ENCODE measurements at regions of chr20 and their contacts with region 1.

Region 1: DNA sequence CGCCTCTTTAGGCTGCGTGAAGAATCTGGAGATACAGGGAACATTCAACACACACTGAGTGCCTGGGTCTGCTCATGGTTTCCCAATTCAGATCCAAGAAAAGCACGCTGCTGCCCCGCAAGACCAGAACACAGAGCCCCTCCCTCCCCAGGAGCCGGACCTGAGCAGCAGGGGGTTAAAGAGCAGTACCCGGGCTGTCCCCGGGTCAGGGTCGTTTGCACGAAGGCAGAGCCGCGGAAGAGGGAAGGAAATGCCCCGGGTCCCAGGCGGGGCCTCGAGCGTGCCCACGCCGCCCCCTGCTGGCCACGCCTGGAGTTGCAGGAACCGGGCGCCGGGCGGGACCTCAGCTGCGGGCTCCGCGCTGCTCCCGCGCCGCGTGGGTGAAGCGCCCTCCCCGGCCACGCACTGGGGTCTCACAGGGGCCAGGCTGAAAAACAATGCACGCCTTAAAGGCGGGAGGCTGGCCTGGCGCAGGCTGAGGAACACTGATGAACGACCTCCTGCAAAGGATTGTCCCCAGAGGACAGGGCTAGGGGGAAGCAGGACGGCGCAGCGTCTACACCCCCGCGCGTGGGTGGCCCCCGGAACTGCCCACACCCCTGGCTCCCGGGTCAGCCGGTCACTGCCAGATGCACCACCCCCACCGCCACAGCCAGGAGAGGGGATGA is 48.9 kb downstream of the ANKRD60 start:
- DNase-seq: no peak
- H3K4me3 ChIP-seq: peak overlapping the region; percentile 24 to 45
- H3K27ac ChIP-seq: peak overlapping the region; percentile 25
- H3K4me1 ChIP-seq: peaks cover 36% of the 10 kb centered on the region
- H3K27me3 ChIP-seq: no peaks in the 10 kb centered on the region
- CTCF ChIP-seq: peak; percentile 95 to 96 (median 95)
- POLR2A ChIP-seq: no peak

Region 2: DNA sequence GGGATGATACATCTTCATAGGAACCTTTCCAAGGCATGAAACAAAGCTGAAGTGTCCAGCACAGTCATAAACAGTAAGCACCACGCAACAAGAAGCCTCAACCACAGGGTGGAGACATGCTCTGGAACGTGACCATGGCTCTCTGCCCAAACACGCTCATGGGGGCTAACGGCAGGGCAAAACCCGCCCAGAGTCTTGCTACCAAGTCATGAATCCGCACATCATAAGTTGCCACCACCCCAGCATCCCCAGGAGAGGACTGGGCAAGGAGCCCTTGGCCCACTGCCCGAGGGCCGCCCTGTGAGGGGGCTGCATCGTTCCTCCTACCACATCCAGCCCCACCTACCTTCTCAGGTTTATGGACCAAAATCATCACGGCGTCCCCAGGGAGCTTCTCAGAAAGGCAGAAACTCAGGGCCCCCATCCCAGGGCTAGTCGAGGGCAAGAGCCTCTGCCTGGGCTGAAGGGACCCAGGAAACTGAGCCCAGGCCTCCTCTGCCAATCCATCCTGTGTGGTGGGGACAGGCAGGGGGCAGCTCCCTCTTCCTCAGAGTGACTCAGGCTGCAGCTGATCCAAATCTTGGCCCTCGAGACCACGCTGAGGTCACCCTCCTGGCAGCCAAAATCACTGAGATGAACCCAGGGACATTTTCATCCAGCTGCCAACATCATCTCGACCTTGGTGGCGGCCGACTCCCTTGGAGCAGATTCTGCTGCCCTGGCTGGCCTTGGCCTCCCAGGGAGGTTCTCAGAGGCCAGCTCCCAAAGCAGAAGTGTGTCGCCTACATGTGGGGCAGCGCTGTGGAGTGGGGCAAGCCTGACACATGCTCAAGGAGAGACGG is 955.7 kb before region 1 on chr20:
- intact Hi-C with region 1: no loop called
- DNase-seq: no peak
- H3K4me3 ChIP-seq: no peak overlapping the region
- H3K27ac ChIP-seq: no peak overlapping the region
- H3K4me1 ChIP-seq: peaks cover 16% of the 10 kb centered on the region
- H3K27me3 ChIP-seq: no peaks in the 10 kb centered on the region
- CTCF ChIP-seq: no peak
- POLR2A ChIP-seq: no peak

Region 3: GRCh38 chr20:57654363-57654997 is 525.1 kb before region 1 on chr20:
- intact Hi-C with region 1: loop called (anchors 5 kb)
- DNase-seq: peak in 1 of 2 donors; percentile 81
- H3K4me3 ChIP-seq: no peak overlapping the region
- H3K27ac ChIP-seq: peak overlapping the region; percentile 41
- H3K4me1 ChIP-seq: peaks cover 15% of the 10 kb centered on the region
- H3K27me3 ChIP-seq: no peaks in the 10 kb centered on the region
- CTCF ChIP-seq: peak; percentile 66 to 94 (median 86)
- POLR2A ChIP-seq: no peak

Region 4: DNA sequence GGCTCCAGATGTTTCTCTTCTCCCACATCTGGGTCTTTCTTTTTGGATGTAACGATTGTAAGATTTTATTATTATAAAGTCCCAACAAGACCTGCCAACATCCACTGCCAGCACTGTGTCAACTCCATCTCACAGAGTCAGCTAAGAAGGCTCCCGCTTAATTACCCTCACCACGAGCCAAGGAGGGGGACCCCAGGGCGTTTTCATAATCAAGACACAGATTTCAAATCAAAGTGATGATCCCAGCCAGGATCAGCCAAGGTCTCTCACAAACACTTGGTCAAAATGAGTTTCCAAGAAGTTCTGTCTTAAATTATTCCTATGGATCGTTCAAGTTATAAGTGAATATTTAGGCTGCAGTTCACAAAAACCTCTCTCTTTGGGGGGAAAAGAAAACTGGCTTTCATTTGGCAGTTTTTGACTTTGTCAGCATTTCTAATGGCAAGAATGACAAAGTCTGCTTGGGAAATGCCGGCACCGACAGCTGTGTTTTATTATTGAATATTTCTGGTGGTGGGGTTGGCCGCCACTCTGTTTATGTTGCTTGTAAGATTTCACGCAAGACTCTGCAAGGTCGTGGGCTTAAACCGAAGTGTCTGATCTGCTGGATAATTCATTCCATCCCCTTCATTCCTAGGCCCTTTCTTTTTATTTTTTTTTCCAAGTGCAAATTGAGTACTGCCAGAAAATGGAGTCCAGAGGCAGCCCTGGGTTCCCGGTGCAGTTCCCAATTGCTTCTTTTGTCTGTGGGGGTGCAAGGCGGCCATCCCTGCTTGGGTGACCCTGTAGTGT is 299.6 kb before region 1 on chr20:
- intact Hi-C with region 1: loop called (anchors 10 kb)
- DNase-seq: peak; percentile 46 to 88
- H3K4me3 ChIP-seq: no peak overlapping the region
- H3K27ac ChIP-seq: peak overlapping the region; percentile 53
- H3K4me1 ChIP-seq: peaks cover 39% of the 10 kb centered on the region
- H3K27me3 ChIP-seq: no peaks in the 10 kb centered on the region
- CTCF ChIP-seq: no peak
- POLR2A ChIP-seq: no peak

Region 5: DNA sequence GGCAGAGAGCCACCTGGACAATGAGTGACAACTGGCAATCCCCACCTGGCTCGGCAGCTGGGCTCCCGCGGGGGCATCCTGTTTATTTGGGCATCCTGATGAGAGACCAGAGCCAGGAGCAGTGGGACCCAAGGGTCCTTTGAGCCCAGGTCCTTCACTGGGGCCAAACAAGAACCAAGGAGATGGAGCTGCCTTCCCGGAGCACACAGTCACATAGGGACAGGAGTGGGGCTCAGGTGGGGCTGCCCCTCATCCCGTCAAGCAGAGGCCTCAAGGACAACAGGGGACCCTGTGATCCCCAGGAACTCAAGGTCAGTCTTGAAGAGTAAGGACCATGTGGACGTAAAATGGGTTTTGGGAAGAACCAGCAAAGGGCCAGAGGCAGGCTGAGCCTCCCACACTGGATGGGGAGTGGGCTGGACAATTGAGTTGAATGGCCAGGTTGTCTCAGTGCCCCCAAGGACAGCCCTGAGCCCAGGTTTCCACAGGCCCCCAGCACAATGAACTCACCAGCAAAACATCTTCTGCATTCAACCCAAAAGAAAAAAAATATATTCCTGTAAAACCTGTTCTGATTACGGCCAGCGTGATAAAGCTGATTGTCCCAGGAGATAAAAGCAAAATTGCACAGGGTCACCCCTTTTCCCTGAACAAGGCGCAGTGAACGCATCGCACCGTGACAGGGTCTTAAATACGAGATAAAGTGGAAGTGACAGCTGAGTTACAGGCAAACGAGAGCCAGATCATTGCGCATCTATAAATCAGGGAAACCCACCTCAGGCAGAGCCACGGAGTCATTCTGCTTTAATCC is 37.4 kb before region 1 on chr20:
- intact Hi-C with region 1: no loop called
- DNase-seq: peak; percentile 65 to 82
- H3K4me3 ChIP-seq: no peak overlapping the region
- H3K27ac ChIP-seq: no peak overlapping the region
- H3K4me1 ChIP-seq: no peaks in the 10 kb centered on the region
- H3K27me3 ChIP-seq: no peaks in the 10 kb centered on the region
- CTCF ChIP-seq: no peak
- POLR2A ChIP-seq: no peak

Region 6: GRCh38 chr20:58196008-58196820 is 16.6 kb after region 1 on chr20:
- intact Hi-C with region 1: no loop called
- DNase-seq: no peak
- H3K4me3 ChIP-seq: no peak overlapping the region
- H3K27ac ChIP-seq: no peak overlapping the region
- H3K4me1 ChIP-seq: no peaks in the 10 kb centered on the region
- H3K27me3 ChIP-seq: no peaks in the 10 kb centered on the region
- CTCF ChIP-seq: no peak
- POLR2A ChIP-seq: no peak